H1 (cell line): ENCODE measurements at regions of chr7 and their contacts with region 1.

Region 1: GRCh38 chr7:149861446-149862045 is 12.2 kb upstream of the ATP6V0E2 start:
- DNase-seq: peak in 1 of 2 experiments; percentile 89
- H3K4me3 ChIP-seq: no peak overlapping the region
- H3K27ac ChIP-seq: no peak overlapping the region
- H3K4me1 ChIP-seq: no peaks in the 10 kb centered on the region
- H3K27me3 ChIP-seq: no peaks in the 10 kb centered on the region; a peak in 2 of 7 replicates
- CTCF ChIP-seq: peak; percentile 98 to 100 (median 99)
- EP300 ChIP-seq: no peak
- POLR2A ChIP-seq: no peak
- RAD21 ChIP-seq: peak; percentile 87 to 94

Region 2: DNA sequence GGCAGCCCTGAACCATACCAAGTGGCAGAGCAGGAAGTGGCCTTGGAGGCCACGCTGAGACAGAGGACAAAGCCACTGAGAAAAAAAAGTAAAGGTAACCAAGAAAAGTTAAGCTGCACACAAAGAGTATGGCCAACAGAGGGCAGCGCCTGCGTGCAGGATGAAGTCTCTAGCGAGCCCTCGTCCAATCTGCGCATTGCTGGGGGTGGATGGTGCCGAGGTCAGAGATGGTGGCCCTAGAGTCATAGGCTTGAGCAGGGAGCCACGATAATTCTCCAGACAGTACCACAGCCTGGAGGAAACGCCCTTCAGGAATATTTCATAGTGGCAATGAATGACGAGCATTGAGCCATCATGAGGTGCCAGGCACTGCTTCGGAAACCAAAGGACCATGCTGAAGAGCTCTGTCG is 21.9 kb after region 1 on chr7:
- CTCF ChIA-PET with region 1: interaction called, 68 read pairs
- POLR2A ChIA-PET with region 1: no interaction called
- DNase-seq: peak; percentile 29 to 77
- H3K4me3 ChIP-seq: no peak overlapping the region
- H3K27ac ChIP-seq: no peak overlapping the region
- H3K4me1 ChIP-seq: peaks cover 5 to 9% (median 5%) of the 10 kb centered on the region in 4 experiments; a peak in 6 of 7 replicates
- H3K27me3 ChIP-seq: no peaks in the 10 kb centered on the region
- CTCF ChIP-seq: peak; percentile 74 to 91 (median 88)
- EP300 ChIP-seq: no peak
- POLR2A ChIP-seq: no peak
- RAD21 ChIP-seq: peak; percentile 93 to 95